ENCODE measurements at regions of chr22 and their contacts with region 1.

Region 1: DNA sequence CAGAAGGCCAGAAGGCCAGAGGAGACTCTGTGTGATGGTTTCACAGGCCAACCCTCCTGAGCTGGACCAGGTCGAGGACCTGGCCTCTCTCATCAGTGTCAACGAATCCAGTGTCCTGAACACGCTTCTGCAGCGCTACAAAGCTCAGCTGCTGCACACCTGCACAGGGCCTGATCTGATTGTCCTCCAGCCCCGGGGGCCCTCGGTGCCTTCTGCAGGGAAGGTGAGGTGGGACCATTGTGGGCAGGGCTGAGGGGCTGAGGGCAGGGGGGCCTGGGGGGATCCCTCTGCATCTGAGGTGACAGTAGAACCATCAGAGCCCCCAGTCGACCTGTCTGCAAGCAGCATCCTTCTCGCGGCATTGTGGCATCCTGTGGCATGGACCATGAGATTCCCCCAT is 30.3 kb downstream of the MYO18B start:
- DNase-seq: no peak
- H3K4me3 Mint-ChIP-seq: no peak overlapping the region
- H3K27ac Mint-ChIP-seq: peak overlapping the region; percentile 83
- H3K4me1 Mint-ChIP-seq: peaks cover 46% of the 10 kb centered on the region
- H3K27me3 Mint-ChIP-seq: no peaks in the 10 kb centered on the region

Region 2: GRCh38 chr22:25546751-25547150 is 225.5 kb before region 1 on chr22:
- CTCF ChIA-PET with region 1: interaction called, 14 read pairs
- DNase-seq: no peak
- H3K4me3 Mint-ChIP-seq: no peak overlapping the region
- H3K27ac Mint-ChIP-seq: no peak overlapping the region
- H3K4me1 Mint-ChIP-seq: peaks cover 32% of the 10 kb centered on the region
- H3K27me3 Mint-ChIP-seq: no peaks in the 10 kb centered on the region

Region 3: DNA sequence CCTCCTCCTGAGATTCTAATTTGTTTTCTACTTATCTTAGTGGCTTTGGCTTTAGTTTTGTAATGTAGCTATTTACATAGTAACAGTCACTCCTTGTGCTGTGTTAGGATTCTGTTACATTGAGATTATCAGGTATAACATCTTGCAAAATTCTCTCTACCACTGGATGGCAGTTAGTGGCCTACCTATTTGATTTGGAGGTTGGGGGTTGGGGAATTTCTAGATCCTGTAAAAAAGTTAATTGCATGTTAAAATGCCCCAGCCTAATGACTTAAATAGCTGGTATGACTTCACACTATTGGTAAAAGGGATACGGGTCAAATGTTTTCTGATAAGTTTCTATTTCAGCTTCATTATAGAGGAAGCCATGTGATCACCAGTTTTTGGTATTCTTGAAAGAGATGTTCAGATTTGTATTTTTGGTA is 205.0 kb before region 1 on chr22:
- CTCF ChIA-PET with region 1: interaction called, 15 read pairs
- DNase-seq: no peak
- H3K4me3 Mint-ChIP-seq: peak overlapping the region; percentile 90
- H3K27ac Mint-ChIP-seq: peak overlapping the region; percentile 24
- H3K4me1 Mint-ChIP-seq: peaks cover 65% of the 10 kb centered on the region
- H3K27me3 Mint-ChIP-seq: no peaks in the 10 kb centered on the region

Region 4: DNA sequence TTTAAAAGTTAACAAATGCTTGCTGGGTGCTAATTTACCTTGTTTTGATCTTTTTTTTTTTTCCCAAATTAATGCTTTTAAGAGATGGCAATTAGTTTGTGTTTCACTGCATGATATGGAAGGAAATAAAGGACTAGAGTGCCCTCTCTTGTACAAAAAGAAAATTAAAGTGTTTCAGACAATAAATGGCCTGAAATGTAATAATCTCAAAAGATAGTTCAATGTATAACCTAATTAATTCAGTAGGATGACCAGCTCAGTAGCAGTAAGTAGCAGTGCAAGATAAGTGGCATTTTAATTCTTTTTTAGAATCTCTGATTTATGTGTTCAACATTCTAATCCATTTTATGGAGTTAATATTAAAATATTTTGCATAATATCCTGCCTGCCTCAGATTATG is 70.2 kb before region 1 on chr22:
- CTCF ChIA-PET with region 1: interaction called, 33 read pairs
- DNase-seq: no peak
- H3K4me3 Mint-ChIP-seq: peak overlapping the region; percentile 69
- H3K27ac Mint-ChIP-seq: peak overlapping the region; percentile 84
- H3K4me1 Mint-ChIP-seq: peaks cover 61% of the 10 kb centered on the region
- H3K27me3 Mint-ChIP-seq: no peaks in the 10 kb centered on the region

Region 5: GRCh38 chr22:25736378-25737011 is 35.8 kb before region 1 on chr22:
- CTCF ChIA-PET with region 1: interaction called, 10 read pairs
- DNase-seq: peak; percentile 87
- H3K4me3 Mint-ChIP-seq: peak overlapping the region; percentile 31
- H3K27ac Mint-ChIP-seq: peak overlapping the region; percentile 99
- H3K4me1 Mint-ChIP-seq: peaks cover 74% of the 10 kb centered on the region
- H3K27me3 Mint-ChIP-seq: no peaks in the 10 kb centered on the region

Region 6: GRCh38 chr22:25747245-25747944 is 24.9 kb before region 1 on chr22:
- CTCF ChIA-PET with region 1: interaction called, 19 read pairs
- DNase-seq: no peak
- H3K4me3 Mint-ChIP-seq: no peak overlapping the region
- H3K27ac Mint-ChIP-seq: peak overlapping the region; percentile 83
- H3K4me1 Mint-ChIP-seq: peaks cover 84% of the 10 kb centered on the region
- H3K27me3 Mint-ChIP-seq: no peaks in the 10 kb centered on the region